ENCODE measurements at regions of chr7 and their contacts with region 1.

Region 1: DNA sequence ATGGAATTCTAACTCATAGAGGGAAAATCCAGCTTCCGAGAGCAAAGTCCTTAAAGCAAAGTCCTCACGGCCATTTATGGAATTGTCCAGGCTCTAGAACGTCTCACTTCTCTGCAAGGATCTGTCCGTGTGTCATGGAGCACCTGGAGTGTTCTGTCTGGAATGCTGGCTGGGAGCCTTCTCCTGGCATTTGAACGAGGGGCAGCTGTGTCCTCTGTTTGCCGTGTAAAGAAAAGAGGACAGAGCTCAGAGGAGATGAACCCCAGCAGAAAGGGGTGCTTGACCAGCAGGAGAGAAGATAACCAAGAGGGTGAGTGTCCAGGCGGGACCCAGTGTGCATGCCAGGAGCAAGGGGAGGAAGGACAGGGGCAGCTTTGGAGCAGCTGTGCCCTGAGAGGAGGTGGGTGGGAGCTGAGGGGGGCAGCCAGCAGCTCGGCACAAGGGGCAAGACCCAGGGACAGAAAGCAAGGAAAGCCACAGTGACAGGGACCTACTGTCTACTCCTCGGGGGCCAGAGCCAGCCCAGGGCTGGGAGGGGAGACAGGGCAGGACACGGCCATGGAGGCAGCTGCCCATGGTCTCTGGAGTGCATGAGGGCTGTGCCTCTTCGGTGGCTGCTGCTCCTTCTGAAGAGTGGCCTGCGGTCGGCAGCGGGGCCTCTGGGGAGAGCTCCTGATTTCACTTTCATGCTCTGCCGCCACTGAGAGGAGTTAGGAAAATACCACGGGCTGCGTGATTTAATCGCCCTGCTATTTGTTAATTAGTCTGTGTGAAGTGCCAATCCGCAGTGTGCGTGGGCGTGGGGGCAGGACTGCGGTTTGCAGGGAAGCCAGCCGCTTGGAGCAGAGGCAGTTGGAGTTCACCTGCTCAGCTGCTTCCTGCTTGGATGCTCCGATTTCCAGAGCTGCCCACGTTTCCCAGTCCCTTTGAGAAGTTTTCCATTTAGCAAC is 149.3 kb upstream of the SHH start:
- DNase-seq: no peak
- H3K4me3 Mint-ChIP-seq: no peak overlapping the region
- H3K27ac Mint-ChIP-seq: no peak overlapping the region
- H3K4me1 Mint-ChIP-seq: peaks cover 20% of the 10 kb centered on the region
- H3K27me3 Mint-ChIP-seq: peaks cover 8% of the 10 kb centered on the region

Region 2: GRCh38 chr7:155941688-155942087 is 19.8 kb before region 1 on chr7:
- CTCF ChIA-PET with region 1: no interaction called
- intact Hi-C with region 1: loop called (anchors 2 kb)
- DNase-seq: no peak
- H3K4me3 Mint-ChIP-seq: no peak overlapping the region
- H3K27ac Mint-ChIP-seq: no peak overlapping the region
- H3K4me1 Mint-ChIP-seq: peaks cover 10% of the 10 kb centered on the region
- H3K27me3 Mint-ChIP-seq: peaks cover 5% of the 10 kb centered on the region

Region 3: GRCh38 chr7:155984609-155985405 is 23.3 kb after region 1 on chr7:
- CTCF ChIA-PET with region 1: no interaction called
- intact Hi-C with region 1: no loop called
- DNase-seq: no peak
- H3K4me3 Mint-ChIP-seq: no peak overlapping the region
- H3K27ac Mint-ChIP-seq: no peak overlapping the region
- H3K4me1 Mint-ChIP-seq: peaks cover 11% of the 10 kb centered on the region
- H3K27me3 Mint-ChIP-seq: peaks cover 4% of the 10 kb centered on the region

Region 4: GRCh38 chr7:156279635-156280034 is 318.1 kb after region 1 on chr7:
- CTCF ChIA-PET with region 1: no interaction called
- intact Hi-C with region 1: no loop called
- DNase-seq: no peak
- H3K4me3 Mint-ChIP-seq: no peak overlapping the region
- H3K27ac Mint-ChIP-seq: no peak overlapping the region
- H3K4me1 Mint-ChIP-seq: no peaks in the 10 kb centered on the region
- H3K27me3 Mint-ChIP-seq: peaks cover 2% of the 10 kb centered on the region

Measured in activated naive CD4-positive, alpha-beta T cell treated with anti-CD3 and anti-CD28 coated beads for 36 hours (primary cell).